HAP-1 (cell line): ENCODE measurements at regions of chrX and their contacts with region 1.

Region 1: DNA sequence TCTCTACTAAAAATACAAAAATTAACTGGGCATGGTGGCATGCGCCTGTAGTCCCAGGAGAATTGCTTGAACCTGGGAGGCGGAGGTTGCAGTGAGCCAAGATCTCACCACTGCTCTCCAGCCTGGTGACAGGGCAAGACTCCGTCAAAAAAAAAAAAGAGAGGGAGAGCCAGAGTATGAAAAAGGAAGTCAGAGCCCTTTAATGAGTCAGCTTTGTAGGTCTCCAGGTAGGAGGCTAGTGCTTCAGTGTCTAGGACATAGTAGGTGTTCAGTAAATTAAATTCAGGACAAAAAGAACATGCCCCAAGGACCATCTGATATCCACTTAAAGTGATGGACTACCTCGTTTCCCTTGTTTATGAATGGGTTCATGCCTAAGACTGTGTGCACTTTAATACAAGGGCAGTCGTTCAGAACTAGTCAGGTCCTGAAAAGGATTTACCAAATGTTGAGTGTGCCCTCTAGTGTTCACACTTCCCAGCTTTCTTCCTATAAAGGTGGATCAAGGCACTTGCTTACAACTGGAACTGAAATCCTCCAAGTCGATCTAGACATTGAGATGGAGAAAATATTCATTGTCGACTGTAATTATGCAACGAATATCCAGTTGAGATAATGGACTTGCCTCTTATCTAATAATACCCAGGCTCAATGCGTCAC is 29.0 kb downstream of the F9 start:
- DNase-seq: peak; percentile 66 to 92
- H3K4me3 ChIP-seq: no peak overlapping the region
- H3K4me1 ChIP-seq: no peaks in the 10 kb centered on the region
- H3K27me3 ChIP-seq: no peaks in the 10 kb centered on the region

Region 2: DNA sequence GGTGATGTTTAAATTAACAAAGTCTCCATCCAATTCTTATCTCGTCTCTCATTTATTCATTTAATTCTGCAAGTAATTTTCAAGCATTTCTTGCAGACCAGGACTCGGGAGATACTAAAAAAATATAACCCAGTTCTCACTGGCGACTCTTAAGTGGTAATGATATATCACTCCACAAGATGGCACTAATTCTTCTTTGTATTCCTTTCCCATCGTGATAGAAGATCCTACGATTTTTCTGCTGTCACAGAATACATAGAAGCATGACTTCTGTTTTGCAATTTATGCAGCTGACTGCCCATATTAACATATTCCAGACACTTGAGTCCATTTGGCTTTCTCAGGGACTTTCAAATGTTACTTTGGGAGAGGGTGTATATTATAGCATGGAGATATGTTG is 784.0 kb before region 1 on chrX:
- in situ Hi-C with region 1: loop called (anchors 10 kb)
- DNase-seq: peak in 1 of 2 experiments; percentile 58
- H3K4me3 ChIP-seq: no peak overlapping the region
- H3K4me1 ChIP-seq: no peaks in the 10 kb centered on the region
- H3K27me3 ChIP-seq: no peaks in the 10 kb centered on the region

Region 3: DNA sequence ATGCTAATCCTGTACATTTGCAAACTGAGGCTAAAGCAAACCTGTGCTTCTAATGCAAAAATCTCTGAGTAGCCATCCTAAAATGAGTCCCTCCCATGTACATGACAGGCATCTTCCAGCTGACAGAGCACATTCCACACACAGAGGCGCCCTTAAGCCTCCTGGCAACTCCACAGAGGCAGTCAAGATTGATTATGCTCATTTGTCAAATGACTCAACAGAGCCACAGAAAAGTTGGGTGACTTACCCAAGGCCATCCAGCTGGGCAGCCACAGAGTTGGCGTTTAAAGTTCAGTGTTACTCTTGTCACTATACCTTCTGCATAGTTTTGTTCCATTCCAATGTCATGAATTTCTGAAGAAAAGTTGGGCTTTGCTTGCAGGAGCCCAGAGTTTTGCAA is 453.4 kb before region 1 on chrX:
- in situ Hi-C with region 1: loop called (anchors 25 kb)
- DNase-seq: peak in 1 of 2 experiments; percentile 28
- H3K4me3 ChIP-seq: no peak overlapping the region
- H3K4me1 ChIP-seq: no peaks in the 10 kb centered on the region
- H3K27me3 ChIP-seq: no peaks in the 10 kb centered on the region

Region 4: DNA sequence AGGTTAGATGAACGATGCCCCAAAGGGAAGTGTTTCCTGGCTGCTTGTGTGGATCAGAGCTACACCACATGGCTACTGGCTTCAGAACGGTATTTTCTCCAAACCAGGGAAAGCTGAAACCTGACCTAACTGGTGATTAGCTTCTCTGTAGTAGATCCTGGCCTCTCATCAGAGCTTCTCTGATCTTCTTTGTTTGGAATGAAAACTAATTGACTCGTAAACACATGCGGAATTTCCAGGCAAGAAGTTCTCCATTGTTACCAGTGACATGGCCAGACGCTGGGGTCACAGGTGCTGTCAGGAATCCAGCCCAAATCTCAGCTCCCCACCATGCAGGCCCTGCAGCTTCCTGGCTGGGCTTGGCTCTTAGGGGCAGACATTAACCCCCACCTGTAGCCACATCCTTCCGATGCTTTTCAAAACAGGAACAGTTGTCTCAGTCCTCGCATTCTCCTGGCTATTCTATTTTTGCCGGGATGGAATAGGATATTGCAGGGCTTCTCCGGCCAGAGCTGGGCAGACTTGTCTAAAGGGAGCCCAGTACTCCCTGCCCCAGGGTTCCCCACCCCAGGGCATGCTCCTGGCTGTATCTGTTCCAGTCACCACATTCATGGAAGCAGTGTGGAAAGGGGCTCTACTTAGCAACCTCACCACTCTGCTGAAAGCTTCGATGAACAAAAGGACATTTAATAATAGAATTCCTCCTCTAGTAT is 334.4 kb before region 1 on chrX:
- in situ Hi-C with region 1: no loop called
- DNase-seq: no peak
- H3K4me3 ChIP-seq: no peak overlapping the region
- H3K4me1 ChIP-seq: no peaks in the 10 kb centered on the region
- H3K27me3 ChIP-seq: no peaks in the 10 kb centered on the region

Region 5: GRCh38 chrX:139890991-139891700 is 331.6 kb after region 1 on chrX:
- in situ Hi-C with region 1: no loop called
- DNase-seq: no peak
- H3K4me3 ChIP-seq: no peak overlapping the region
- H3K4me1 ChIP-seq: peaks cover 8% of the 10 kb centered on the region
- H3K27me3 ChIP-seq: no peaks in the 10 kb centered on the region

Region 6: GRCh38 chrX:140022482-140022881 is 463.0 kb after region 1 on chrX:
- in situ Hi-C with region 1: no loop called
- DNase-seq: no peak
- H3K4me3 ChIP-seq: no peak overlapping the region
- H3K4me1 ChIP-seq: no peaks in the 10 kb centered on the region
- H3K27me3 ChIP-seq: no peaks in the 10 kb centered on the region

Region 7: GRCh38 chrX:140503714-140504351 is 944.3 kb after region 1 on chrX:
- in situ Hi-C with region 1: no loop called
- DNase-seq: no peak
- H3K4me3 ChIP-seq: no peak overlapping the region
- H3K4me1 ChIP-seq: peaks cover 3% of the 10 kb centered on the region; the same call in 1 of the 2 replicates
- H3K27me3 ChIP-seq: no peaks in the 10 kb centered on the region